Left cardiac atrium (tissue), 4 donors: ENCODE measurements at regions of chr6 and their contacts with region 1.

Region 1: DNA sequence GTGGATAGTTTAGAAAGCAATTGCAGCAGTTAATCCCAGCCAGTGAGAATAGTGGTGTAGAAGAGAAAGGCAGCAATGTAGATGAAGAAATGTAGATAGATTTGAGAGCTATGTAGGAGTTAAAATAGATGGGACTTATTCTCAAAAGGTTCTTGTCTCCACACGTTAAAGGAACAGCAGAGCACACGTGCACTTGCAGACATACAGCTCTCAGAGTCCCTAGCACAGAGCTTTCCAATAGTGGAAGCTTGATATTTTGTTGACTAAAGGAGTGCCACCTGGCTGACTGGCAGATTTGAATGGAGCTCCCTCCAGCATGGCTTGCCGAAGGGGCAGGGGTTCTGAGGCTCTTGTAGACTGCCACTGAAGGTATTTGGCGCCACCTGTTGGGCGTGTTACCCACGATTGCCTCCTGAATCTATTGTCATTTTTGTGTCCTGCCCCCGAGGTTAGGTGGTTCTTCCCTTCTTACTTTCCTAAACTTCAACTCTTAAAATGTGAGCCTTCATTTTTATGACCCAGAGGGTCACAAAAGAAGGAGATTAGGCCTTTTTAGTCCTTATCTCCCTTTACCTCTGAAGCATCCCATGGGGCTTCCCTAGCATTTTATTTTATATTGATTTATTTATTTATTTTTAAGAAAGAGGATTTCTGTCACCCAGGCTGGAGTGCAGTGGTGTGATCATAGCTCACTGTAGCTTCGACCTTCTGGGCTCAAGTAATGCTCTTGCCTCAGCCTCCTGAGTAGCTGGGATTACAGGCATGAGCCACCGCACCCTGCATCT is 16.4 kb downstream of the BRD2 start:
- DNase-seq: peak; percentile 93
- ATAC-seq: peak; percentile 76 to 90

Region 2: GRCh38 chr6:32885698-32886286 is 99.0 kb before region 1 on chr6:
- intact Hi-C with region 1: loop called (anchors 1 to 2 kb)
- DNase-seq: no peak
- ATAC-seq: peak; percentile 42 to 59

Region 3: GRCh38 chr6:32933636-32934085 is 51.1 kb before region 1 on chr6:
- intact Hi-C with region 1: loop called (anchors 1 to 2 kb)
- DNase-seq: peak; percentile 85
- ATAC-seq: peak; percentile 65 to 67